PC-3 (cell line): ENCODE measurements at regions of chr17 and their contacts with region 1.

Region 1: GRCh38 chr17:35312790-35313711 is 60.4 kb downstream of the SLFN11 start:
- DNase-seq: peak; percentile 57
- ATAC-seq: peak; percentile 87
- H3K4me3 ChIP-seq: no peak overlapping the region
- H3K27ac ChIP-seq: no peak overlapping the region
- H3K4me1 ChIP-seq: peaks cover 17% of the 10 kb centered on the region; the same call in 1 of the 2 replicates
- H3K27me3 ChIP-seq: no peaks in the 10 kb centered on the region
- CTCF ChIP-seq: peak; percentile 75

Region 2: GRCh38 chr17:35148144-35148543 is 164.9 kb before region 1 on chr17:
- CTCF ChIA-PET with region 1: no interaction called
- POLR2A ChIA-PET with region 1: no interaction called
- intact Hi-C with region 1: no loop called
- DNase-seq: no peak
- ATAC-seq: no peak
- H3K4me3 ChIP-seq: no peak overlapping the region
- H3K27ac ChIP-seq: no peak overlapping the region
- H3K4me1 ChIP-seq: 0 out of 2 replicates have a peak, but pooled peaks cover 4% of the 10 kb centered on the region
- H3K27me3 ChIP-seq: no peaks in the 10 kb centered on the region
- CTCF ChIP-seq: no peak

Region 3: DNA sequence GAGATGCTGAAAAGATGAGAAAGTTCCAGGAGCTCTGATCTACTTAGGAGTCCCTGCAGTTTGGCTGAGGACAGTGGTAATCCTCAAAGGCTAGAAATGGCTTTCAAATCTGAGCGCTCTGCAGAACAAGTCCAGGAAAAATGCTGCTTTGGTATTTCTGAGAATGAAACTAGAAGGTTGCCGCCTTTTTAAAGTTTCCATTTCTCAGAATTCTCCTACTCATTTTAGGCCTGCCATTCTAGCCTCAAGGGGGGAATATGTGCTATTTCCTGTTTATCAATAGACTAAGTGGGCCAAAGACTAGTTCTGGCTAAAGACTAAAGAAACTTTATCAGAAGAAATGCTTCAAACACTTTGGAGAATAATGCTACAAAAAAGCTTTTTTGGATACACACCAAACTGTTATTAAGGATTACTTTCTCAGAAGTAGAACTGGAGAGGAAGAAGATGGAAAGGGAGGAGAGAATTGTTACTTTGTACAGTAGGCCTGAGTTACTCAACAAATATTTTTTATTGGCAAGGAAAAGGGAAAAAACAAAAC is 224.6 kb after region 1 on chr17 and contains the start of gene SLFN12L:
- CTCF ChIA-PET with region 1: interaction called, 3 read pairs
- POLR2A ChIA-PET with region 1: no interaction called
- intact Hi-C with region 1: loop called (anchors 1 kb)
- DNase-seq: no peak
- ATAC-seq: no peak
- H3K4me3 ChIP-seq: no peak within 1 kb of the TSS
- H3K27ac ChIP-seq: no peak within 1 kb of the TSS
- H3K4me1 ChIP-seq: peaks cover 4% of the 10 kb centered on the region; the same call in 1 of the 2 replicates
- H3K27me3 ChIP-seq: no peaks in the 10 kb centered on the region
- CTCF ChIP-seq: no peak
- total RNA-seq, gene SLFN12L: not detected in 2 replicates